ENCODE measurements at regions of chr5 and their contacts with region 1.

Region 1: DNA sequence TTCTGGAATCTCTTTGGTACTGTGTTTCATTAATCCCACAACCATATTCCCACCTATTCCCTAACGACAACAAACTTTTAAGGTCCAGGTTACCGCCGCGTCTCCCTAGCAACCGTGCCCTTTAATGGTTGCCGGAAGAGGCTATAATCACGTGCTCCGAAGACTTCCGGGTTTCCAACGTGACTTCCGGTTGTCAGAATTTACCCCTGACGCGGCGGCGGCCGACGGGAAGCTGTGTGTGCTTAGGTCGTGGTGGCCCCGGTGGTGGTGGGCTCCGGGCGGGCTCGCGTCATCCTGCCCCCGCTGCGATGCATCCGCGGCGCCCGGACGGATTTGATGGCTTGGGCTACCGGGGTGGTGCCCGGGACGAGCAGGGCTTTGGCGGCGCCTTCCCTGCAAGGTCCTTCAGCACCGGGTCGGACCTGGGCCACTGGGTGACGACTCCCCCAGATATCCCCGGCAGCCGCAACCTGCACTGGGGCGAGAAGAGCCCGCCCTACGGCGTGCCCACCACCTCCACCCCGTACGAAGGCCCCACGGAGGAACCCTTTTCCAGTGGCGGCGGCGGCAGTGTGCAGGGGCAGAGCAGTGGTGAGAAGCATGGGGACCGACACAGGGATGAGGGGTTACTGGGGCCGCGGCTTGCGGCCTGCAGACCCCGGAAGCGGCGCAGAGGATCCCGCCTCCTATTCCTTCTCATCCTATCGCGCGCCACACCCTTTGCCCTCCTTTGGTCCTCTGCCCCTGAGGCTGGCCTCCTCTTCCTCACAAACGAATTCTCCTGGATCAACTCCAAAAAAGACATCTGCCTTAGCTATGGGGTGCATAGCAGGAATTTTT is at the start of gene SLC25A46:
- DNase-seq: peak; percentile 75 to 92 (median 91)
- ATAC-seq: peak; percentile 92
- H3K4me3 ChIP-seq: peak within 1 kb of the TSS; percentile 96
- H3K4me3 Mint-ChIP-seq: peak within 1 kb of the TSS; percentile 90 to 100 (median 96)
- H3K27ac ChIP-seq: peak within 1 kb of the TSS; percentile 86
- H3K27ac Mint-ChIP-seq: peak within 1 kb of the TSS; percentile 91 to 100 (median 96)
- H3K4me1 ChIP-seq: peaks cover 4 to 15% of the 10 kb centered on the region in 2 donors
- H3K4me1 Mint-ChIP-seq: peaks cover 14 to 45% (median 34%) of the 10 kb centered on the region in 7 donors
- H3K27me3 ChIP-seq: no peaks in the 10 kb centered on the region
- H3K27me3 Mint-ChIP-seq: peaks cover 4 to 19% (median 6%) of the 10 kb centered on the region in 5 donors
- total RNA-seq, gene SLC25A46: 23.8 to 50.5 (median 35.9) TPM

Region 2: GRCh38 chr5:108748401-108749127 is 1990.5 kb before region 1 on chr5:
- CTCF ChIA-PET with region 1: no interaction called
- POLR2A ChIA-PET with region 1: no interaction called
- intact Hi-C with region 1: loop called (anchors 1 to 2 kb)
- DNase-seq: peak; percentile 92 to 99 (median 98)
- ATAC-seq: peak; percentile 94
- H3K4me3 ChIP-seq: peak overlapping the region; percentile 91
- H3K4me3 Mint-ChIP-seq: peak overlapping the region; percentile 83 to 100 (median 93)
- H3K27ac ChIP-seq: peak overlapping the region; percentile 94
- H3K27ac Mint-ChIP-seq: peak overlapping the region; percentile 78 to 98 (median 93)
- H3K4me1 ChIP-seq: peaks cover 10 to 12% of the 10 kb centered on the region in 2 donors
- H3K4me1 Mint-ChIP-seq: peaks cover 9 to 26% (median 13%) of the 10 kb centered on the region in 7 donors
- H3K27me3 ChIP-seq: no peaks in the 10 kb centered on the region
- H3K27me3 Mint-ChIP-seq: peaks cover 0 to 52% (median 0%) of the 10 kb centered on the region in 5 donors

Region 3: GRCh38 chr5:110054240-110054639 is 684.8 kb before region 1 on chr5:
- CTCF ChIA-PET with region 1: no interaction called
- POLR2A ChIA-PET with region 1: no interaction called
- intact Hi-C with region 1: loop called in 1 of 2 experiments (anchors 5 kb)
- DNase-seq: peak; percentile 17 to 93 (median 85)
- ATAC-seq: peak; percentile 89
- H3K4me3 ChIP-seq: peak overlapping the region; percentile 6
- H3K4me3 Mint-ChIP-seq: peak overlapping the region; percentile 50 to 86 (median 65)
- H3K27ac ChIP-seq: peak overlapping the region; percentile 63
- H3K27ac Mint-ChIP-seq: peak overlapping the region; percentile 77 to 96 (median 90)
- H3K4me1 ChIP-seq: peaks cover 21 to 35% of the 10 kb centered on the region in 2 donors
- H3K4me1 Mint-ChIP-seq: peaks cover 10 to 50% (median 35%) of the 10 kb centered on the region in 7 donors
- H3K27me3 ChIP-seq: no peaks in the 10 kb centered on the region
- H3K27me3 Mint-ChIP-seq: no peaks in the 10 kb centered on the region

Region 4: GRCh38 chr5:110478895-110479294 is 260.1 kb before region 1 on chr5:
- CTCF ChIA-PET with region 1: no interaction called
- POLR2A ChIA-PET with region 1: no interaction called
- intact Hi-C with region 1: no loop called
- DNase-seq: no peak
- ATAC-seq: no peak
- H3K4me3 ChIP-seq: no peak overlapping the region
- H3K4me3 Mint-ChIP-seq: no peak overlapping the region
- H3K27ac ChIP-seq: no peak overlapping the region
- H3K27ac Mint-ChIP-seq: no peak overlapping the region
- H3K4me1 ChIP-seq: no peaks in the 10 kb centered on the region
- H3K4me1 Mint-ChIP-seq: no peaks in the 10 kb centered on the region
- H3K27me3 ChIP-seq: peaks cover 0 to 3% of the 10 kb centered on the region in 2 donors
- H3K27me3 Mint-ChIP-seq: peaks cover 0 to 6% (median 4%) of the 10 kb centered on the region in 5 donors

Region 5: GRCh38 chr5:110757118-110757729 is 18.2 kb after region 1 on chr5:
- CTCF ChIA-PET with region 1: interaction called, 4 read pairs
- POLR2A ChIA-PET with region 1: interaction called, 3 read pairs
- intact Hi-C with region 1: loop called (anchors 1 kb)
- DNase-seq: peak in 5 of 9 donors; percentile 21 to 45 (median 33)
- ATAC-seq: peak; percentile 45
- H3K4me3 ChIP-seq: no peak overlapping the region
- H3K4me3 Mint-ChIP-seq: no peak overlapping the region
- H3K27ac ChIP-seq: no peak overlapping the region
- H3K27ac Mint-ChIP-seq: no peak overlapping the region
- H3K4me1 ChIP-seq: peaks cover 0 to 4% of the 10 kb centered on the region in 2 donors
- H3K4me1 Mint-ChIP-seq: peaks cover 7 to 30% (median 11%) of the 10 kb centered on the region in 7 donors
- H3K27me3 ChIP-seq: no peaks in the 10 kb centered on the region
- H3K27me3 Mint-ChIP-seq: no peaks in the 10 kb centered on the region

Region 6: GRCh38 chr5:111229871-111230810 is 491.1 kb after region 1 on chr5:
- CTCF ChIA-PET with region 1: no interaction called
- POLR2A ChIA-PET with region 1: no interaction called
- intact Hi-C with region 1: loop called (anchors 5 to 10 kb)
- DNase-seq: peak in 7 of 9 donors; percentile 52 to 86 (median 79)
- ATAC-seq: peak; percentile 73
- H3K4me3 ChIP-seq: peak overlapping the region; percentile 37
- H3K4me3 Mint-ChIP-seq: peak overlapping the region; percentile 79 to 98 (median 90)
- H3K27ac ChIP-seq: peak overlapping the region; percentile 93
- H3K27ac Mint-ChIP-seq: peak overlapping the region; percentile 93 to 100 (median 98)
- H3K4me1 ChIP-seq: peaks cover 64 to 83% of the 10 kb centered on the region in 2 donors
- H3K4me1 Mint-ChIP-seq: peaks cover 38 to 78% (median 73%) of the 10 kb centered on the region in 7 donors
- H3K27me3 ChIP-seq: no peaks in the 10 kb centered on the region
- H3K27me3 Mint-ChIP-seq: no peaks in the 10 kb centered on the region

Region 7: DNA sequence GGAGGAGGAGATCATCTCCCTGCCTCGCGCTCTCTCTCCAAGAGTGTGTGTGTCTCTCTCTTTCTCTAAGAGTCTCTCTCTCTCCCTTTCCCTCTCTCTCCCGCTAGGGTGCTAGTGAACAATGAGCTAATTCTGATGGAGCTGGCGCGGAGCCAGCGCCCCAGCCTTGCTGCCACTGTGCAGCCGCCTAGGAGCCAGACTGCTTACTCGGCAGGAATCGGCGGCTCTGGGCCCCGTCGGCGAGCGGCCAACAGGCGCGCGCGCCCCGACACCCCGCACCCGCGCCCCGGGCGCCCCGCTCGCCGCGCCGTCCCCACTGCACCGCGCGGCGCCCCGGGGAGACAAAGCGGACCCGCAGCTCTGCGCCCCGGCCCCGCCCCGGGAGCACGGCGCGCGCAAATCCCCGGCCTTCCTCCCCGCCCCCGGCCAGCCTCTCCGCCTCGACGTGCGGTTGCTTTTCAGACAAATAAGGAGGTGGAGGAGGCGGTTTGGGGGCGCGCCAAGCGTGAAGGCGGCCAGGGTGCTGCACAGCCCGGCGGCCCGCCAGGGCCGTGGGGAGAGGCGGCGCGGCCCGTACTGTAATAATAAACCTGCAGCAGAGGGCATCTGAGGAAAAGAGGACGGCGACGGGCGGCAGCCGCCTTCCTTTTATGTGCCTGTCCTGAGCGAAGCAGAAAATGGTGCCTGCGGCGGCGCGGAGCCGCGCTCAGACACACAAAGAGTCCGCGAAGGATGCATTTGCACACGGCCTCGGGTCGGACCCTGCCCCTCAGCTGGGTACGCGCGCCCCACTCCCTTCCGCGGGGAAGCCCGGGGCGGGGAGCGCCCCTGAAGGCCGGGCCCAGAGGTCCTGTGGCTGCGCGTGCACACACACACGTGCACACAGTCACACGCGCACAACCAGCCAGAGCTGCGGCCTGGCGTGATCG is 1018.6 kb after region 1 on chr5:
- CTCF ChIA-PET with region 1: no interaction called
- POLR2A ChIA-PET with region 1: no interaction called
- intact Hi-C with region 1: loop called (anchors 5 kb)
- DNase-seq: peak; percentile 65 to 89 (median 86)
- ATAC-seq: peak; percentile 87
- H3K4me3 ChIP-seq: peak overlapping the region; percentile 64
- H3K4me3 Mint-ChIP-seq: peak overlapping the region; percentile 83 to 94 (median 90)
- H3K27ac ChIP-seq: peak overlapping the region; percentile 75
- H3K27ac Mint-ChIP-seq: peak overlapping the region; percentile 57 to 92 (median 83)
- H3K4me1 ChIP-seq: peaks cover 0 to 4% of the 10 kb centered on the region in 2 donors
- H3K4me1 Mint-ChIP-seq: peaks cover 4 to 29% (median 18%) of the 10 kb centered on the region in 7 donors
- H3K27me3 ChIP-seq: no peaks in the 10 kb centered on the region
- H3K27me3 Mint-ChIP-seq: peaks cover 0 to 6% (median 0%) of the 10 kb centered on the region in 5 donors